ENCODE measurements at regions of chr19 and their contacts with region 1.

Region 1: GRCh38 chr19:6862673-6863078 is 24.7 kb upstream of the ADGRE1 start:
- DNase-seq: peak; percentile 66 to 85 (median 77)
- ATAC-seq: peak; percentile 88 to 97 (median 93)
- H3K4me3 ChIP-seq: peak overlapping the region in 2 of 4 donors; percentile 21 to 36
- H3K27ac ChIP-seq: peak overlapping the region in 1 of 4 donors; percentile 53
- H3K4me1 ChIP-seq: peaks cover 0 to 3% (median 0%) of the 10 kb centered on the region in 3 donors
- H3K27me3 ChIP-seq: no peaks in the 10 kb centered on the region
- CTCF ChIP-seq: peak; percentile 60 to 79 (median 69)

Region 2: GRCh38 chr19:6516659-6517291 is 345.9 kb before region 1 on chr19:
- intact Hi-C with region 1: loop called in 1 of 3 experiments (anchors 10 kb)
- DNase-seq: peak; percentile 85 to 100 (median 92)
- ATAC-seq: peak; percentile 84 to 93 (median 88)
- H3K4me3 ChIP-seq: peak overlapping the region; percentile 57 to 77 (median 62)
- H3K27ac ChIP-seq: peak overlapping the region; percentile 59 to 89 (median 76)
- H3K4me1 ChIP-seq: peaks cover 0 to 9% (median 0%) of the 10 kb centered on the region in 3 donors
- H3K27me3 ChIP-seq: no peaks in the 10 kb centered on the region
- CTCF ChIP-seq: peak; percentile 86 to 97 (median 97)

Region 3: GRCh38 chr19:6632002-6632621 is 230.6 kb before region 1 on chr19:
- intact Hi-C with region 1: loop called in 1 of 3 experiments (anchors 5 kb)
- DNase-seq: peak in 4 of 6 donors; percentile 33 to 71 (median 60)
- ATAC-seq: peak; percentile 73 to 98 (median 87)
- H3K4me3 ChIP-seq: no peak overlapping the region
- H3K27ac ChIP-seq: no peak overlapping the region
- H3K4me1 ChIP-seq: no peaks in the 10 kb centered on the region
- H3K27me3 ChIP-seq: peaks cover 0 to 5% (median 0%) of the 10 kb centered on the region in 4 donors
- CTCF ChIP-seq: peak; percentile 48 to 85 (median 84)

Region 4: GRCh38 chr19:6737284-6738046 is 125.2 kb before region 1 on chr19 and contains the start of gene GPR108:
- intact Hi-C with region 1: loop called in 1 of 3 experiments (anchors 5 kb)
- DNase-seq: peak; percentile 98 to 100 (median 99)
- ATAC-seq: peak; percentile 71 to 82 (median 77)
- H3K4me3 ChIP-seq: peak within 1 kb of the TSS; percentile 79 to 96 (median 88)
- H3K27ac ChIP-seq: peak within 1 kb of the TSS; percentile 91 to 95 (median 93)
- H3K4me1 ChIP-seq: peaks cover 12 to 27% (median 13%) of the 10 kb centered on the region in 3 donors
- H3K27me3 ChIP-seq: no peaks in the 10 kb centered on the region
- CTCF ChIP-seq: no peak
- total RNA-seq, gene GPR108: 46.1 to 62.6 (median 52.0) TPM

Region 5: GRCh38 chr19:6794686-6795431 is 67.8 kb before region 1 on chr19:
- intact Hi-C with region 1: no loop called
- DNase-seq: no peak
- ATAC-seq: no peak
- H3K4me3 ChIP-seq: no peak overlapping the region
- H3K27ac ChIP-seq: no peak overlapping the region
- H3K4me1 ChIP-seq: no peaks in the 10 kb centered on the region
- H3K27me3 ChIP-seq: no peaks in the 10 kb centered on the region
- CTCF ChIP-seq: no peak

Measured in pancreas (tissue), 10 donors.